ENCODE measurements at regions of chr9 and their contacts with region 1.

Region 1: DNA sequence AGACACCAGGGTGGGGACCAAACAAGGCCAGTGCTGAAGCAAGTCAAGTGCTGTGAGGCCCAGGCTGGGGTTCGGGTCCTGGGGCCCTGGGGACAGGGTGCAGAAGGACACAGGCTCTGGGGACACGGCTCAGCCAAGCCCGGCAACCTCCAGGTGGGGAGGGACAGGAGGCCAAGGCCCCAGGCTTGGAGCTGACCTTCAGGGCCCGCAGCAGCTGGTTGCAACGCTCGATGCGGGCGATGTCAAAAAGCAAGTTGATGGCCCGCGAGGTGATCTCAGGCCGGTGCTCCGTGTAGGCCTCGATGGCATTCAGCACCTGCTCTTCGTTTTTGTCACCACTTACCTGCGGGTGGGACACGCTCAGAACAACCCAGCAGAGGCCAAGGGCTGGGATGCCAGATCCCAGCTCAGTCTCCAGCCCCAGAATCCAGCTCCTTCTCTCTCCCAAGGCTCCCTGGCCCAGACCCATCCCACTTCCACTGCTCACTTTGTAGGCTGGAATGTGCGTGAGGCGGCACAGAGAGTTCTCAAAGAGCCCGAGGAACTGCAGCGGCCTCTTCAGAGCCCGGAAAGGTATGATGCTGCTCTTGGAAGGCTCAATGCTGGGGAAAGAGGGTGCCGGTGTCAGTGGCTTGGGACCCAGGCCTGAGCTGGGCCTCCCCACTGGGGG is 20.7 kb downstream of the ZER1 start:
- DNase-seq: no peak
- H3K4me3 ChIP-seq: no peak overlapping the region
- H3K27ac ChIP-seq: no peak overlapping the region
- H3K4me1 ChIP-seq: no peaks in the 10 kb centered on the region
- H3K27me3 ChIP-seq: no peaks in the 10 kb centered on the region
- CTCF ChIP-seq: no peak

Region 2: GRCh38 chr9:128809832-128810231 is 58.8 kb after region 1 on chr9:
- CTCF ChIA-PET with region 1: no interaction called
- dilution Hi-C with region 1: loop called (anchors 5 kb)
- in situ Hi-C with region 1: no loop called
- intact Hi-C with region 1: no loop called
- DNase-seq: no peak
- H3K4me3 ChIP-seq: no peak overlapping the region
- H3K27ac ChIP-seq: no peak overlapping the region
- H3K4me1 ChIP-seq: no peaks in the 10 kb centered on the region
- H3K27me3 ChIP-seq: no peaks in the 10 kb centered on the region
- CTCF ChIP-seq: no peak

Measured in mammary epithelial cell (primary cell).